PC-3 (cell line): ENCODE measurements at regions of chr18 and their contacts with region 1.

Region 1: GRCh38 chr18:46445914-46446313 is 211.1 kb downstream of the LOXHD1 start:
- DNase-seq: no peak
- ATAC-seq: no peak
- H3K4me3 ChIP-seq: no peak overlapping the region
- H3K27ac ChIP-seq: no peak overlapping the region
- H3K4me1 ChIP-seq: no peaks in the 10 kb centered on the region
- H3K27me3 ChIP-seq: no peaks in the 10 kb centered on the region
- CTCF ChIP-seq: peak; percentile 33

Region 2: DNA sequence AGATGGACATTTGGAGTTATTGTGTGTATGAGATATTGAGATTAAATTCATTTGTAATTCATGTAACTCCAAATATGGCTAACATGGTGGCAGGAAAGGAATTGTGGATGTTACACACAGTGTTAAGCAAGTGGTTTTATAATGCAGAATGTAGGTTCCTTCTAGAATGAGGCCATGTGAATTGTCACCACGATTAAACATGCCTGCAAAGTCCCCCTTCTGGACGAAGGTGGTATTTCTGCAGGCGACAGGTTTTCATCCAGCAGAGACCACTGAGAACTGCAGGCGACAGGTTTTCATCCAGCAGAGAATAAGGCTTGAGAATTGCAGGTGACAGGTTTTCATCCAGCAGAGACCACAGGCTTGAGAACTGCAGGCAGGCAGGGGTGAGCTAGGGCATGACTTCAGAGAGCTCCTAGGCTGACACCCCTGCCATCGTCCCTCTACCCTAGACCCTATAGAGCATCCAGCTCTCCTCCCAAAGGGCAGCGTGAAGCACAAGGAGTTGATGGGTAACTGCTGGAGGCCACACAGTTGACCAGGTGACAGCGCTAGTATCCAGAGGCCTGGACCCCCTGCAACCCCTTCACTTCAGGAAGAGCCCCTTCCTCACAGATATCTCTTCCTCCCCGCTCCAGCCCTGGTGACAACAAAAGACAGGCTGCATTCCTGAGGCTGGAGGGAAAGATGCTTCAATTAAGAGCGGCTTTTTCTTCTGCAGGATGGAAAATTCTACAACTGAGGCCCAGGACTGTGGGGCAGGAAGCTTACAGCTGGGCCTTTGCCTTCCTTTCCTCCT is 35.3 kb after region 1 on chr18:
- CTCF ChIA-PET with region 1: no interaction called
- POLR2A ChIA-PET with region 1: no interaction called
- intact Hi-C with region 1: loop called (anchors 1 kb)
- DNase-seq: peak; percentile 44
- ATAC-seq: peak; percentile 38; the same call in 1 of the 2 replicates
- H3K4me3 ChIP-seq: no peak overlapping the region
- H3K27ac ChIP-seq: no peak overlapping the region
- H3K4me1 ChIP-seq: peaks cover 9% of the 10 kb centered on the region; the same call in 1 of the 2 replicates
- H3K27me3 ChIP-seq: no peaks in the 10 kb centered on the region
- CTCF ChIP-seq: peak; percentile 55